Caco-2 (cell line): ENCODE measurements at regions of chr4 and their contacts with region 1.

Region 1: DNA sequence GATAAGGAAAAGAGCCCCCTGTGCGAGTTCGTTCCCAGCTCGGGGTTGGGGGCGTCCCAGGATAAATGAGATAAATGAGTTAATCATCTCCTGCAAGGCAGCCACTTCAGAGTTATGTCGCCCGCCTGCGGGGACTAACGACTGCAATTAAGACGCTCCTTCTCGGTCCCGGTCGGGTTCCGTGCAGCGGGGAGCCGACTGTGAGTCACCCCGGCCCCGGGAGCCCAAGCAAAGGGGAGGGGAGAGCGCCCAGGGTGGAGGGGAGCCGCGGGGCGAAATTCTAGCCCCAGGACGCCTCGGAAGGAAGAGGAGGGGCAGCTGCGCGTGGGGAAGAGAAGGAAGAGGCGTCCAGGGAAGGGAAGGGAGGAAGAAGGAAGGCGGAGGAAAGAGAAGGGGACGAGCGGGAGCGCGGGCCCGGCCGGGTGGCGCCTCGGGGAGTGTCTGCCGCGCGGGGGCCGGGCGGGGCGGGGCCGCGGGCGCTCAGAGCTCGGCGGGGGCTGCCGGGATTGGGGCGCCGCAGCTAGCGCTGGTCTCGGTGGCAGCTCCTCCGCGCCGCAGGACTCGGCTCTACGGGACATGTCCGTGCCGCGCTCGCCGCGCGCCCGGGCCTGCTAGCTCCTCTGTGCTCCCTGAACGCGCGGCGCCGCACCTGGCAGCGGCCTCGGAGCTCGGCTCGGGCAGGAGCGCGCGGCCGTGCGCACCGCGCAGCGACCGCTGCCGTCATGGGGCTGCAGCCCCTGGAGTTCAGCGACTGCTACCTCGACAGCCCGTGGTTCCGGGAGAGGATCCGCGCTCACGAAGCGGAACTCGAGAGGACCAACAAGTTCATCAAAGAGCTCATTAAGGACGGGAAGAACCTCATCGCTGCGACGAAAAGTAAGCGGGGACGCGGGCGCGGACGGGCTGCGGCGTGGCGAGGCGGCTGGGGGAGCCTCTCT is at the start of gene ARHGAP10:
- DNase-seq: peak; percentile 71 to 73
- H3K4me3 ChIP-seq: peak within 1 kb of the TSS; percentile 96
- H3K4me3 Mint-ChIP-seq: peak within 1 kb of the TSS; percentile 79
- H3K27ac Mint-ChIP-seq: peak within 1 kb of the TSS; percentile 38
- H3K4me1 ChIP-seq: peaks cover 32% of the 10 kb centered on the region
- H3K4me1 Mint-ChIP-seq: peaks cover 44% of the 10 kb centered on the region
- H3K27me3 ChIP-seq: no peaks in the 10 kb centered on the region
- H3K27me3 Mint-ChIP-seq: no peaks in the 10 kb centered on the region
- CTCF ChIP-seq: no peak
- total RNA-seq, gene ARHGAP10: 33.2 and 36.6 TPM in 2 replicates

Region 2: GRCh38 chr4:147683717-147684700 is 47.8 kb before region 1 on chr4 and contains the start of gene PRMT9:
- CTCF ChIA-PET with region 1: interaction called, 3 read pairs
- POLR2A ChIA-PET with region 1: interaction called, 3 read pairs
- intact Hi-C with region 1: loop called (anchors 2 kb)
- DNase-seq: peak; percentile 91 to 92
- H3K4me3 ChIP-seq: peak within 1 kb of the TSS; percentile 74
- H3K4me3 Mint-ChIP-seq: peak within 1 kb of the TSS; percentile 90
- H3K27ac Mint-ChIP-seq: peak within 1 kb of the TSS; percentile 85
- H3K4me1 ChIP-seq: peaks cover 8% of the 10 kb centered on the region
- H3K4me1 Mint-ChIP-seq: no peaks in the 10 kb centered on the region
- H3K27me3 ChIP-seq: no peaks in the 10 kb centered on the region
- H3K27me3 Mint-ChIP-seq: no peaks in the 10 kb centered on the region
- CTCF ChIP-seq: no peak
- total RNA-seq, gene PRMT9: 7.5 and 8.6 TPM in 2 replicates

Region 3: DNA sequence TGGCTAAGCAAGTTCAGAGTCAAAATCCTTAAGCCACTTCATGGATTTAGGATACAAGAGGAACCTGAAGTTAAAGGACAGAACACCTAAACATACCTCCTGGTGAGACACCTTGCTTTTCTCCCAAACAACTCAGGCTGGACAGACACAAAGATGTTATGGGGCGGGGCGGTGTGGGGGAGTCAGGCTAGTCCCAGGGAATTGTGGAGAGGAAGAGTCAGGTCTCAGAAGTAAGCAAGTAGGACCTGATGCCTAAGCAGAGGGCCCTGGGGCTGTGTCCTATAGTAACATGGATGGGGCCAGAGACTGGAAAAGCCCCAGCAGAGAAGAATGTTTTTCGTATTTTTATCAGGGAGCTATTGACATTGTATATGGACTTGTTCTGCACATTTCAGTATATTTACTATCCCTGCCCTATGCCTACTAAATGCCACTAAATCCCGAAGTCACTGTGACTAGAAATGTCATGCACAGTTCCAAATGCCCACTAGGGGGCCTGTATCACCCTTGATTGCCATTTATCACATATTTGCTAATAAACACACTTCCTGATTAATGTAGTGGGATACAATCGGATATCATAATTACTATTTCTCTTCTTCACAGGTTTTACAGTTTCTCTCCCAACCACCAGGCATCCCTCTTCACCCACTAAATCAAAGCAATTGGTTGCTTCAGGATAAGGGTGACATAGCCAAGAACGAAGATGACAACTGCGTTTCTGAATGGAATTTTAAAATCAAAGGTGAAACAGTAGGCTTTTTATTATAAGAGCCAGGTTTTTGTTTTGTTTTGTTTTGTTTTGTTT is 23.8 kb before region 1 on chr4:
- CTCF ChIA-PET with region 1: no interaction called
- POLR2A ChIA-PET with region 1: no interaction called
- intact Hi-C with region 1: loop called (anchors 1 kb)
- DNase-seq: peak in 1 of 2 experiments; percentile 56
- H3K4me3 ChIP-seq: no peak overlapping the region
- H3K4me3 Mint-ChIP-seq: no peak overlapping the region
- H3K27ac Mint-ChIP-seq: no peak overlapping the region
- H3K4me1 ChIP-seq: no peaks in the 10 kb centered on the region
- H3K4me1 Mint-ChIP-seq: peaks cover 7% of the 10 kb centered on the region
- H3K27me3 ChIP-seq: no peaks in the 10 kb centered on the region
- H3K27me3 Mint-ChIP-seq: no peaks in the 10 kb centered on the region
- CTCF ChIP-seq: peak; percentile 71 to 81

Region 4: GRCh38 chr4:147760695-147761094 is 28.8 kb after region 1 on chr4:
- CTCF ChIA-PET with region 1: interaction called, 3 read pairs
- POLR2A ChIA-PET with region 1: interaction called, 3 read pairs
- intact Hi-C with region 1: loop called (anchors 2 kb)
- DNase-seq: no peak
- H3K4me3 ChIP-seq: no peak overlapping the region
- H3K4me3 Mint-ChIP-seq: no peak overlapping the region
- H3K27ac Mint-ChIP-seq: peak overlapping the region; percentile 45
- H3K4me1 ChIP-seq: peaks cover 23% of the 10 kb centered on the region
- H3K4me1 Mint-ChIP-seq: peaks cover 31% of the 10 kb centered on the region
- H3K27me3 ChIP-seq: no peaks in the 10 kb centered on the region
- H3K27me3 Mint-ChIP-seq: no peaks in the 10 kb centered on the region
- CTCF ChIP-seq: no peak

Region 5: GRCh38 chr4:147768113-147768512 is 36.3 kb after region 1 on chr4:
- CTCF ChIA-PET with region 1: no interaction called
- POLR2A ChIA-PET with region 1: interaction called, 5 read pairs
- intact Hi-C with region 1: loop called (anchors 1 kb)
- DNase-seq: peak; percentile 47 to 61
- H3K4me3 ChIP-seq: no peak overlapping the region
- H3K4me3 Mint-ChIP-seq: no peak overlapping the region
- H3K27ac Mint-ChIP-seq: no peak overlapping the region
- H3K4me1 ChIP-seq: peaks cover 36% of the 10 kb centered on the region
- H3K4me1 Mint-ChIP-seq: peaks cover 23% of the 10 kb centered on the region
- H3K27me3 ChIP-seq: no peaks in the 10 kb centered on the region
- H3K27me3 Mint-ChIP-seq: no peaks in the 10 kb centered on the region
- CTCF ChIP-seq: no peak

Region 6: GRCh38 chr4:147994076-147994475 is 262.2 kb after region 1 on chr4:
- CTCF ChIA-PET with region 1: no interaction called
- POLR2A ChIA-PET with region 1: no interaction called
- intact Hi-C with region 1: no loop called
- DNase-seq: no peak
- H3K4me3 ChIP-seq: no peak overlapping the region
- H3K4me3 Mint-ChIP-seq: no peak overlapping the region
- H3K27ac Mint-ChIP-seq: no peak overlapping the region
- H3K4me1 ChIP-seq: no peaks in the 10 kb centered on the region
- H3K4me1 Mint-ChIP-seq: peaks cover 5% of the 10 kb centered on the region
- H3K27me3 ChIP-seq: no peaks in the 10 kb centered on the region
- H3K27me3 Mint-ChIP-seq: no peaks in the 10 kb centered on the region
- CTCF ChIP-seq: no peak